Right cardiac atrium (tissue), 5 donors: ENCODE measurements at regions of chr15 and their contacts with region 1.

Region 1: DNA sequence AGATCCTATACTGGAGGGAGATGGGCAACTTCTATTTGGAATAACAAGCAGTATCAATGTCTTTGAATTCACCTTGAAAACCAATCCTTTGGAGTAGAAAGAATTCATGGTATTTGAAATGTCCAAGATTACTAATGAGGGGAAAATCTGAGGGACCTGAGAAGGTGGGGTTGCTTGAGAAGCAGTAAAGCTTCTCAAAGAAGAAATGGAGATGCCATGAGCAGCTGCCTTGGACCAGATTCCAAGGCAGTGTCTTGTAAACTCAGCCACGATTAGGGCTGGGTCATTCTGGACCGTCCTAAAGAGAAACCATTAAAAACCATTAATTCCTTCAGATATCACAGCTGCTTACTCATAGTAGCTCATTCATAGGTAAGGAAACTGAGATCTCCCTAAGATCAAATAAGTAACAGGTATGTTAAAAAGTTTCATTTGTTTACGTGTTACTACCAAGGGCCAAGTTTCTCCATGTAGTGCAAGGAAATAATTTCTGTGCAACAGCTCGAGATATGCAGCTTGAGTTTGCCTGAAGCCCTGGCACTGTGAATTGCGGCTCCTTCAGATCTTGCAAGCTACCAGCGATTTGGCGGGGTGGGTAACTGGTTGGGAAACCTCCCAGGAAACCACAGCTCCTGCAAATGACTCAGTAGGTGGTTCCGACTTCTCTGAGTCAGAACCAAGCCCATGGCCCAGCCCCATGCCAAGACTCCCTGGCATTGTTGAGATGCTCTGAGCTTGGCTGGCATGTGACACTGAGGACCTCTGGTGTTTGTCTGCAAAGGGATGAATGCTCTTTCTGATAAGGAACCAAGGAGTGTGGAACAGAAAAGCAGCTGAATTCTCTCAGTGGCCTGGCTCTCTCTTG is 296.8 kb downstream of the RORA start:
- DNase-seq: peak; percentile 42 to 47 (median 46)
- ATAC-seq: peak; percentile 31 to 34
- H3K4me3 ChIP-seq: no peak overlapping the region
- H3K27ac ChIP-seq: no peak overlapping the region
- H3K4me1 ChIP-seq: peaks cover 6% of the 10 kb centered on the region
- H3K27me3 ChIP-seq: no peaks in the 10 kb centered on the region

Region 2: DNA sequence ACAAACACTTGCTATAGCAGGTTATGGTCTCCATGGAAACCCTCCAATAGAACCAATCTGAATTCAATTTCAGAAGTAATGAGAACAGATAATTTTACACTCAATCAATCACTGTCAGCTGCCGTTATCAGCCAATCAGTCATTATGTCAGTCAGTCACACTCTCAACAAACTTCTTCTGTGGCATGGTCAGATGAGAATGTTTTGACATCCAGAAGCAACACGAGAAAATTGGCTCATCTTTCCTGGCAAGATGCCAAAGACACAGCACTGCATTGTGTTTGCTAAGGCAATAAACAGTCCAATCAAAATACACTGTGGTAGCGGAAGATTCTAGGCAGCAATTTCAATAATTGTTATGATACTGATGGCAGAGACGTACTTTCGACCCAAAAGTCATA is 106.1 kb after region 1 on chr15:
- intact Hi-C with region 1: loop called in 1 of 4 experiments (anchors 5 kb)
- DNase-seq: no peak
- ATAC-seq: peak; percentile 34 to 40
- H3K4me3 ChIP-seq: no peak overlapping the region
- H3K27ac ChIP-seq: no peak overlapping the region
- H3K4me1 ChIP-seq: peaks cover 5% of the 10 kb centered on the region
- H3K27me3 ChIP-seq: no peaks in the 10 kb centered on the region